ENCODE measurements at regions of chr6 and their contacts with region 1.

Region 1: GRCh38 chr6:170306324-170307079 is at the start of gene FAM120B:
- DNase-seq: peak; percentile 93
- ATAC-seq: peak; percentile 95
- H3K4me3 Mint-ChIP-seq: peak within 1 kb of the TSS; percentile 98
- H3K27ac Mint-ChIP-seq: peak within 1 kb of the TSS; percentile 91
- H3K4me1 Mint-ChIP-seq: peaks cover 47% of the 10 kb centered on the region
- H3K27me3 Mint-ChIP-seq: peaks cover 13% of the 10 kb centered on the region
- CTCF ChIP-seq: no peak
- total RNA-seq, gene FAM120B: 32.2 and 35.1 TPM in 2 replicates

Region 2: DNA sequence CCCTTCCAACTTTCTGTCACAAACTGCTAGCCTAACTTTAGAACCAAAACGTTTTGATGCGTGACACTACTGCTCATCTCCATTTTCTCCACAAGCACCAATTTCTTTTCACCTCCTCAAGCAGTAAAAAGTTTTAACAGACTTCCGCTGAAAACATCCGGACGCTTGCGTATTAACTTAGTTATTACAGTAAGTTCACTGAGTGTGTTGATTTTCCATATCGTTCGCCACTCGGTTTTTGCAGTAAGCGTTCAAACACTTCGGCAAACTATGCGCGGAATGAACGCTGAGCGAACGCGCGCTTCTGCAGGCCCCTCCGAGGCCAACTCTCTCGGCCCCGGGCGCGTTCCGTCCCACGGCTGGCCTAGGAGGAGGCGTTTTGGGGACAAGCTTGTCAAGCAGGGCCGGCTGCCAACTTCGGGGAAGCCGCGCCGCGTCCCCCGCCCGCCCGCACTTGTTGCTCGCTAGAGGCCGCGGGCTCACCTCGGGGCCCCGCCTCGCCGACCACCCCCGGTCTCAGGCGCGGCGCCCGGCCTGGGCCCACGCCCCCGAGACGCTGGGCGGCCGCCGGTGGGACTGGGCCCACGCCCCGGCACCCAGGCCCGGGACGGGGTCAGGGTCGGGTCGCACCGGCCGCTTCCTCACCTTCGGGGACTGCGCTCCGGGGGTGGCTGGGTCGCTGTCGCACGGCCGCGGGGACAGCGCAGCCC is 583.1 kb before region 1 on chr6:
- CTCF ChIA-PET with region 1: no interaction called
- POLR2A ChIA-PET with region 1: no interaction called
- intact Hi-C with region 1: loop called (anchors 2 kb)
- DNase-seq: peak; percentile 76
- ATAC-seq: peak; percentile 45
- H3K4me3 Mint-ChIP-seq: peak overlapping the region; percentile 82
- H3K27ac Mint-ChIP-seq: peak overlapping the region; percentile 89
- H3K4me1 Mint-ChIP-seq: peaks cover 30% of the 10 kb centered on the region
- H3K27me3 Mint-ChIP-seq: no peaks in the 10 kb centered on the region
- CTCF ChIP-seq: no peak

Region 3: DNA sequence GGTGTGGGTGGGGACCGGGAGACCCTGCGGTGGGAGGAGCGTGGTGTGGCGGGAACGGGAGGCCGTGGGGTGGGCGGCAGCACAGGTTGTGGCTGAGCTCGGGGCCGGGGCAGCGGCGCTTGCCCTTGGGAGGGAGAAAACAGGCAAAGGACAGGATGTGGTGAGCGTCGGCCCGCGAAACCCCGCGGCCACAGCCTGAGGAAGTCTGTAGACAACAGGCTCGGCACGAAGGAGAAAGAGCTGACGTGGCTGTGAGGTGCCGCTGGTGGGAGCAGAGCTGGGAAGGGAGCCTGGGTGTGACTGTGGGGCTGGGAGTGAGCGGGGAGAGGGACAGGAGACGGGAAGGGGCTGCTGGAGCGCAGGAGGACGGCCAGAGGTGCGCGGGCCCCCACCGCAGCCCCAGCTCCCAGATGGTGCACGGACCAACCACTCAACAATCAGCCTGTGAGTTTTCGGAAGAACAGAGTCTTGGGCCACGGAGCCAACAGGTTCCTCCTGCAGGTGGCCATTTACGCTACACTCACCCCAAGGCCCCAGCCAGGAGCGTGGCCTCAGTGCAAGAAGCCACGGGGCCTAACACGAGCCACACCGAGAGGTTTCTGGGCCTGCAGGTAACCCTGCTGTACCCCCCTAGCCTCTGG is 218.4 kb before region 1 on chr6:
- CTCF ChIA-PET with region 1: no interaction called
- POLR2A ChIA-PET with region 1: no interaction called
- intact Hi-C with region 1: loop called (anchors 5 kb)
- DNase-seq: peak; percentile 44
- ATAC-seq: peak; percentile 57
- H3K4me3 Mint-ChIP-seq: peak overlapping the region; percentile 82
- H3K27ac Mint-ChIP-seq: peak overlapping the region; percentile 85
- H3K4me1 Mint-ChIP-seq: peaks cover 30% of the 10 kb centered on the region
- H3K27me3 Mint-ChIP-seq: no peaks in the 10 kb centered on the region
- CTCF ChIP-seq: no peak

Region 4: GRCh38 chr6:170271771-170272314 is 34.7 kb before region 1 on chr6:
- CTCF ChIA-PET with region 1: no interaction called
- POLR2A ChIA-PET with region 1: no interaction called
- intact Hi-C with region 1: loop called (anchors 2 kb)
- DNase-seq: peak; percentile 53
- ATAC-seq: peak; percentile 88
- H3K4me3 Mint-ChIP-seq: peak overlapping the region; percentile 87
- H3K27ac Mint-ChIP-seq: peak overlapping the region; percentile 77
- H3K4me1 Mint-ChIP-seq: peaks cover 22% of the 10 kb centered on the region
- H3K27me3 Mint-ChIP-seq: no peaks in the 10 kb centered on the region
- CTCF ChIP-seq: no peak

Region 5: GRCh38 chr6:170329321-170329720 is 22.8 kb after region 1 on chr6:
- CTCF ChIA-PET with region 1: no interaction called
- POLR2A ChIA-PET with region 1: no interaction called
- intact Hi-C with region 1: no loop called
- DNase-seq: no peak
- ATAC-seq: no peak
- H3K4me3 Mint-ChIP-seq: no peak overlapping the region
- H3K27ac Mint-ChIP-seq: no peak overlapping the region
- H3K4me1 Mint-ChIP-seq: no peaks in the 10 kb centered on the region
- H3K27me3 Mint-ChIP-seq: no peaks in the 10 kb centered on the region
- CTCF ChIP-seq: no peak

Region 6: DNA sequence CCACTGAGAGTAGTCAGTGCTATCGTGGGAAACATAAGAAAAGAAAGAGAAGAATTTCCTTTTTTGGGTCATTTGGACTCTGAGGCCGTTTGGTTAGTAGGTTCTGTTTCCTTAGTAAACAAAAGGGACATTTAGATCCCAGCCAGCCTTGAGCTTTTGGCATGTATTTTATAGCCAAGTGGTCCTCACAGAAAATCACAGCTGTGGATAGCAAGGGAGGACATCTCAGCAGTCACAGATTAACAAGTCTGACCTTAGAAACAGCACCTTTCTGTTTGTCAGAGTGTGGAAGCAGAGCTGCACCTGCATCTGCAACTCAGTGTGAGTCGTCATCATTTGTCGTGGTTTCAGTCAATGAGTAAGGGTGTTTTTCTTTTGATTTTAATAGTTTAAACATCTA is 40.6 kb after region 1 on chr6:
- CTCF ChIA-PET with region 1: no interaction called
- POLR2A ChIA-PET with region 1: no interaction called
- intact Hi-C with region 1: no loop called
- DNase-seq: no peak
- ATAC-seq: no peak
- H3K4me3 Mint-ChIP-seq: no peak overlapping the region
- H3K27ac Mint-ChIP-seq: no peak overlapping the region
- H3K4me1 Mint-ChIP-seq: peaks cover 12% of the 10 kb centered on the region
- H3K27me3 Mint-ChIP-seq: no peaks in the 10 kb centered on the region
- CTCF ChIP-seq: no peak

Region 7: DNA sequence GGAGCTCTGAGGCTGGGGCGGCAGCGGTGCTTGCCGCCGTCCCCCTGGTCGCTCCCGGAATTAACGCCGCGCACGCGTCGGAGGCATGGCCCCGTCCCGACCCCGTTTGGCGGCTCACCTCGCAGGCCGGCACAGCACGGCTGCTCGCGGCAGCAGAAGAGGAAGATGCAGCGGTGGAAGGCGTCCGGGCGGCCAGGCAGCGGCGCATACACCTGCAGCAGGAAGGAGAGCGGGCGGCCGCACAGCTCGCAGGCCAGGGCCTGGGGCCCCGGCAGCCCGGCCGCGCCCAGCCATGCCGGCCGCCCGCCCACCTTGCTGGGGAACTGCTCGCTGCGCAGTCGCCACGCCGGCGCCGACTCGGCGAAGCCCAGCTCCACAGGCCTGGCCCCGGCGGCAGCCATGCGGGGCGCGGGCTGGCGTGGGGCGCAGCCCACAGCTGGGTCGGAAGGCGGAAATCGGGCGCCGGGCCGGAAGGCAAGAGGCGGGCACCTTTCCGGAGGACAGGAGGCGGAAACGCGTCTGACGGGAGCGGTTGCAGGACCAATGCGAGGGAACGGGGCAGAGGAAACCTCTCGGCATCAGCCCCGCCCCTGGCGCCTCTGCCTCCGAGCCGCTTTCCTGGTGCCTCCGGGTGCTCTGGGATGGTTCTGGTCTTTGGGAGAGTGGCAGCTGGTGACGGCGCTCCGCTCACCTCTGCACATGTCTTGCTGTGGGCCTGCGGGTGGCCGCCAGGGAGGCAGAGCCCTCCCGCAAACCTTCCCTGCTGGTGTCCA is 277.9 kb after region 1 on chr6 and contains the start of gene PDCD2:
- CTCF ChIA-PET with region 1: no interaction called
- POLR2A ChIA-PET with region 1: no interaction called
- intact Hi-C with region 1: loop called (anchors 1 kb)
- DNase-seq: peak; percentile 86
- ATAC-seq: peak; percentile 95
- H3K4me3 Mint-ChIP-seq: peak within 1 kb of the TSS; percentile 98
- H3K27ac Mint-ChIP-seq: peak within 1 kb of the TSS; percentile 94
- H3K4me1 Mint-ChIP-seq: peaks cover 20% of the 10 kb centered on the region
- H3K27me3 Mint-ChIP-seq: no peaks in the 10 kb centered on the region
- CTCF ChIP-seq: no peak
- total RNA-seq, gene PDCD2: 88.4 and 90.8 TPM in 2 replicates